Activated T-helper 1 cell treated with anti-CD3 and anti-CD28 coated beads, Interleukin-12 subunit alpha, Interleukin-12 subunit beta, Interleukin-2, Interleukin-4 antibody, amounts not matched to agents 30 ng/mL and 10 ng/mL and 1 ng/mL, durations not matched to agents 14 hours and 24 hours and 36 hours (primary cell): ENCODE measurements at regions of chr15 and their contacts with region 1.

Region 1: GRCh38 chr15:64893481-64894394 is 18.0 kb upstream of the ANKDD1A start:
- DNase-seq: peak; percentile 96
- H3K4me3 Mint-ChIP-seq: peak overlapping the region; percentile 93
- H3K27ac Mint-ChIP-seq: peak overlapping the region; percentile 100
- H3K4me1 Mint-ChIP-seq: peaks cover 75% of the 10 kb centered on the region
- H3K27me3 Mint-ChIP-seq: no peaks in the 10 kb centered on the region

Region 2: DNA sequence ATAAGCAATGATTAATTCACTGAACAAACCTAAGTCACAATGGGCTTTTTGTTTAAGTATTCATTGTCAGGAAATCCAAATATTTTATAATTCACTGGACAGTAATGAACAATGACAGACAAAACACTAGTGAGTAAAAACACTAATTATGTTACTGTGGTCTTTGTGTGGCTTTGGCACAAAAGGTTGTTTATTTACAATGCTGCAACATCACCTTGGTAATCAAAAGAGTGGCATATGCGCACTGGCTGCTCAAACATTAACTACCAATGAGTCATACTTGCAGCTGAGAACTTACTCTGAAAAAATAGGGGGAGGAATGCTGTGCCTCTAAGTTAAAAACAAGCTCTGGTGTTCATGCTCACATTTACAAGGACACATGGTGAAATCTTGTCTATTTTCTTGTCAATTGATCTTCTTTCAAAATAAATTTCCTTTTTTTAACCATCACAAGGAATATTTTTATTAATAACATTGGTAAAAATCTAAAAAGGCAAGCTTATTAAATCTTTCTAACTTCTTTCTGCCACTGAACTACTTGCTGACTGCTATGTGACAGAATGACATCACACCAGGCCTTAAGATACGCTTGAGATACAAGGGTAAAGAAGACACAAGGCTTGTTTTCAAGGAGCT is 645.7 kb before region 1 on chr15:
- intact Hi-C with region 1: loop called (anchors 5 kb)
- DNase-seq: peak; percentile 27
- H3K4me3 Mint-ChIP-seq: peak overlapping the region; percentile 6
- H3K27ac Mint-ChIP-seq: peak overlapping the region; percentile 76
- H3K4me1 Mint-ChIP-seq: peaks cover 57% of the 10 kb centered on the region
- H3K27me3 Mint-ChIP-seq: peaks cover 2% of the 10 kb centered on the region

Region 3: GRCh38 chr15:64825431-64826294 is 68.1 kb before region 1 on chr15 and contains the start of gene PIF1:
- intact Hi-C with region 1: loop called (anchors 1 kb)
- DNase-seq: peak; percentile 92
- H3K4me3 Mint-ChIP-seq: peak within 1 kb of the TSS; percentile 91
- H3K27ac Mint-ChIP-seq: peak within 1 kb of the TSS; percentile 91
- H3K4me1 Mint-ChIP-seq: peaks cover 40% of the 10 kb centered on the region
- H3K27me3 Mint-ChIP-seq: no peaks in the 10 kb centered on the region
- total RNA-seq, gene PIF1: 19.1 and 23.9 TPM in 2 replicates

Region 4: DNA sequence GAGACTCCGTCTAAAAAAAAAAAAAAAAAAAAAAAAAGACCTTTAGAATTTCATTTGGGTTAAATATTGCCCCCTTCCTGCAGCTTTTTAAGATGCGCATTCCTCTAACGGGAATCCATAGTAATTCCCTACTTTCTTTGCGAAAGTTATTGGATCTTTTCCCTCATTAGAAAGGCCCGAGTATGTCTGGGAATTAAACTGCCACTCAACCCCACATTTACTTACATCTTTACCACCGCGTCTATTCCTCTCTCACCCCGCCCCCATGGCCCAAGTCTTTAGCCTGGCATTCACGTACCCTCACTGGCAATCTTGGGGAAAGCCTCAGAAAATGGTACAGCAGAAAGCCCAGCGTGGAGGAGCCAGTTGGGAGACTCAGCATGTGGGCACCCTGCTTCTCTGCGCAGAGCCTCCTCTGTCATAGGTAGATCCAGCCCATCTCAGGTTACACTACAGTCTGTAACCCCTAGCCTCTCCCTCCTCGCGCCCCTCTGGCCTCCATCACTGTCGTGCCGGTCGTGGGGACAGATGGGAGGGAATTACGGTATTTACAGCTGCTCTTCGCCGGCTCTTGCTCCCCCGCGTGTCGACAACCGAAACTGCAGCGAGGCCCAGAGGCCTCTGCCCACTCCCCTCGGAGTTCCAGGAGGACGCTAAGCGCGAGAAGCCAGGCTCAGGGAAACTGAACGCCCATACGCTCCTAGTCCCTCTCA is 11.5 kb after region 1 on chr15:
- intact Hi-C with region 1: loop called (anchors 1 kb)
- DNase-seq: peak; percentile 71
- H3K4me3 Mint-ChIP-seq: peak overlapping the region; percentile 79
- H3K27ac Mint-ChIP-seq: peak overlapping the region; percentile 50
- H3K4me1 Mint-ChIP-seq: peaks cover 44% of the 10 kb centered on the region
- H3K27me3 Mint-ChIP-seq: peaks cover 11% of the 10 kb centered on the region

Region 5: DNA sequence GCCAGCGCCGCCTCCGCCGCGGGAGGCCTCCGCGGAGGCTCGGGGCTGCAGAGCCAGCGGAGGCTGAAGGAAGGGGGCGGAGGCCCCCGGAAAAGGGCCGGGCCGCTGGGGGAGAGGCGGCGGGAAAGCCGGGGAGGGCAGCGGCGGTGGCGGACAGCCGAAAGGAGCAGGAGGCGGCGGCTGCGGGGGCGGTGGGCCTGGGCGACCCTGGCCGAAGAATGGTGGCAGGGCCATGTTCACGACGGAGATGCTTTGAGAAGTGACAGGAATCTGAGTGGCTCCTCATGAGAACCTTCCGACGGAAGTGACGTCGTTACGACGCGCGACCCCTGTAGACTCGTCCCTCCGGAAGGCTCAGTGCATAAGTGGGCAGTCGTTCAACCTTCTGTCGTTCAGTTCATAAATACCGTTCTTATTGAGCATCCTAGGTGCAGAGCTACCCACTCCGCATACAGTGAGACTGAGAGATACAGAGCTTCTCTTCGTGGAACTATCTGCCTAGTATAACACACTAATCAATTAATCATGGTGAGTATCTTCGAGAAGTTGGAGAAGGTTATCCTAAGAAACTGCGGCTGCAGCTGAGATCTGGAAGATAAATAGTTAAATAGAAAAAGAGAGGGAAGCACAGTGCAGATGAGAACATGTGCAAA is 239.9 kb after region 1 on chr15 and contains the start of gene PDCD7:
- intact Hi-C with region 1: loop called (anchors 1 kb)
- DNase-seq: peak; percentile 80
- H3K4me3 Mint-ChIP-seq: peak within 1 kb of the TSS; percentile 92
- H3K27ac Mint-ChIP-seq: peak within 1 kb of the TSS; percentile 93
- H3K4me1 Mint-ChIP-seq: peaks cover 31% of the 10 kb centered on the region
- H3K27me3 Mint-ChIP-seq: peaks cover 2% of the 10 kb centered on the region
- total RNA-seq, gene PDCD7: 51.2 and 54.7 TPM in 2 replicates

Region 6: DNA sequence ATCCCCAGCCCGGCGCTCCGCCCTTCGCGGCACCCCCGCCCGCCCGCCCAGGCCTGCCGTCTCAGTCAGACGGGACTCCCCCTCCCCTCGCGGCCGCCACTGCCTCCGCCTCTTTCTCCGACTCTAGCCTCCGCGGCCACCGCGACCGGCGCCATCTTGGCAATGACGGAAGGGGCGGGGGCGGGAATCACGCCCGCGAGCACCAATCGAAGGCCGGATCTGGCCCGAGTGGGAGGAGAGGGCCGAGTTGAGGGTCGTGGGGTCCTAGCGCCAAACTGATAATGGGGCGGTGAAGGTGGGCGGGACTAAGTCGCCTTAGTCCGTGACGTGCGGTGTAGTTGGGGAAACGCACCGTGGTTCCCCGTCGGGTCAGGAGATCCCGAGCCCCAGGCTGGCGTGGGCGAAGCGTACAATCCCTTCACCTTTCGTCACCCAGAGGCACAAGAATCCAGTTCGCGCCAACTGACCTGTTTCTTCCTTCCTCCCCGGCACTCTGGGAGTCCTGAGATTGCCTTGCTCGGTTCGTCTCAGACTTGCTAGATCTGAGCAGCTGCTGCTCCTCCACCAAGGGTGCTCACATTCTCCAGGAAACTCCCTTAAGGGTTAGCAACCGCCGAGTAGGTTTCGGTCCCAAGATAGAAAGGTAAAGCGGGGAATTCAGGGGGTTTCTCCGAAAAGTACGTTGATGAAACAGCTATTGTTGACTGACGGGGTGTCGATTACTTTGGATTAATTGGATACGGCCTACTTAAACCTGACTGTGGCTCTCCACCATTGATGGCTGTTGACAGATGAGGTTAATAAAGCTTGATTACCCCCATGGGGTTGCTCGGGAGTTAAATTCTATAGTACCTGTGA is 898.6 kb after region 1 on chr15 and contains the start of gene DENND4A:
- intact Hi-C with region 1: loop called (anchors 10 kb)
- DNase-seq: peak; percentile 99
- H3K4me3 Mint-ChIP-seq: peak within 1 kb of the TSS; percentile 91
- H3K27ac Mint-ChIP-seq: peak within 1 kb of the TSS; percentile 99
- H3K4me1 Mint-ChIP-seq: peaks cover 70% of the 10 kb centered on the region
- H3K27me3 Mint-ChIP-seq: no peaks in the 10 kb centered on the region
- total RNA-seq, gene DENND4A: 50.8 and 59.0 TPM in 2 replicates